ENCODE measurements at regions of chr1 and their contacts with region 1.

Region 1: DNA sequence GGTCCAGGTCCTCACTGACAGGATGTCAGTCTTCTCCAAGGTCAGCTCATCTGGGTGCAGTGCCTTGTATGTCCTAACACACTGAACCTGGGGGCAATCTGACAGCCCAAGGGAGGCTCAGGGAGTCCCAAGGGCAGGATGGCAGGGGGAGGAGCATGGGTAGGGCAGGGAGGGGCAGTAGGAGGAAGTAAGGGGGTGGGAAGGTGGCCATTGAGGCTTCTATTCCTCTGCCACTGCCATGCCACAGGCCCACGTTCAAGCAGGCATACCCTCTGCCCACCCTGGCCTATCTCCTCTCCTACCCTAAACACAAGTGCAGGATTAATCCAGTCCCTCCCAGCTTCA is 13.3 kb downstream of the ARHGEF19 start:
- DNase-seq: no peak
- H3K4me3 ChIP-seq: no peak overlapping the region
- H3K27ac ChIP-seq: no peak overlapping the region
- H3K4me1 ChIP-seq: no peaks in the 10 kb centered on the region; a peak in 1 of 4 replicates
- H3K27me3 ChIP-seq: no peaks in the 10 kb centered on the region
- CTCF ChIP-seq: no peak
- EP300 ChIP-seq: no peak
- RAD21 ChIP-seq: no peak

Region 2: GRCh38 chr1:16187748-16188401 is 11.3 kb before region 1 on chr1:
- CTCF ChIA-PET with region 1: interaction called, 14 read pairs
- POLR2A ChIA-PET with region 1: no interaction called
- DNase-seq: peak; percentile 86
- H3K4me3 ChIP-seq: peak overlapping the region in 1 of 2 experiments; percentile 7; a peak in 1 of 4 replicates
- H3K27ac ChIP-seq: no peak overlapping the region
- H3K4me1 ChIP-seq: peaks cover 0 to 26% of the 10 kb centered on the region in 2 experiments; a peak in 2 of 4 replicates
- H3K27me3 ChIP-seq: no peaks in the 10 kb centered on the region
- CTCF ChIP-seq: peak; percentile 98
- EP300 ChIP-seq: no peak
- RAD21 ChIP-seq: peak; percentile 99

Region 3: GRCh38 chr1:16644193-16644481 is 445.0 kb after region 1 on chr1:
- CTCF ChIA-PET with region 1: no interaction called
- POLR2A ChIA-PET with region 1: no interaction called
- DNase-seq: no peak
- H3K4me3 ChIP-seq: peak overlapping the region; percentile 64 to 100
- H3K27ac ChIP-seq: peak overlapping the region; percentile 50 to 91
- H3K4me1 ChIP-seq: peaks cover 15 to 25% of the 10 kb centered on the region in 2 experiments; a peak in 2 of 4 replicates
- H3K27me3 ChIP-seq: no peaks in the 10 kb centered on the region
- CTCF ChIP-seq: no peak
- EP300 ChIP-seq: no peak
- RAD21 ChIP-seq: no peak